Gastrocnemius medialis (tissue), 4 donors: ENCODE measurements at regions of chr12 and their contacts with region 1.

Region 1: GRCh38 chr12:120015313-120015712 is 26.3 kb downstream of the BICDL1 start:
- DNase-seq: no peak
- ATAC-seq: no peak
- H3K4me3 ChIP-seq: no peak overlapping the region
- H3K27ac ChIP-seq: no peak overlapping the region
- H3K4me1 ChIP-seq: no peaks in the 10 kb centered on the region
- H3K27me3 ChIP-seq: peaks cover 0 to 3% (median 3%) of the 10 kb centered on the region in 3 donors
- CTCF ChIP-seq: no peak
- POLR2A ChIP-seq: no peak

Region 2: GRCh38 chr12:119423285-119423684 is 592.0 kb before region 1 on chr12:
- in situ Hi-C with region 1: no loop called
- intact Hi-C with region 1: loop called (anchors 5 kb)
- DNase-seq: no peak
- ATAC-seq: no peak
- H3K4me3 ChIP-seq: no peak overlapping the region
- H3K27ac ChIP-seq: no peak overlapping the region
- H3K4me1 ChIP-seq: no peaks in the 10 kb centered on the region
- H3K27me3 ChIP-seq: no peaks in the 10 kb centered on the region
- CTCF ChIP-seq: no peak
- POLR2A ChIP-seq: no peak

Region 3: DNA sequence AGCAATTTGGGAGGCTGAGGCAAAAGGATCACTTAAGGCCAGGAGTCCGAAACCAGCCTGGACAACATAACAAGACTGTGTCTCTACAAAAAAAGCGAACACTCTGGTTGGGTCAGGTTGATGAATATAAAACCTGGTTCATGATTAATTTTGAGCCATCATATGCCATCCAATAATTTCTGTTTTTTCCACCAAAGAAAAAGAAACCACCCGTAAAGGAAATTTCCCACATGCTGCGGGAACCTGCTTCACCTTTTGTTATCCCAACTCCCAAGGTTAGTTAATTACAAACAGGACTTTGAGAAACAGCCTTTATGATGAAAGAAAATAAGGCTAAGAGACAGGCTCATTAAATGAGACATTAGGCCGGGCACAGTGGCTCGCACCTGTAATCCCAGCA is 50.4 kb before region 1 on chr12:
- in situ Hi-C with region 1: no loop called
- intact Hi-C with region 1: no loop called
- DNase-seq: no peak
- ATAC-seq: no peak
- H3K4me3 ChIP-seq: no peak overlapping the region
- H3K27ac ChIP-seq: no peak overlapping the region
- H3K4me1 ChIP-seq: no peaks in the 10 kb centered on the region
- H3K27me3 ChIP-seq: no peaks in the 10 kb centered on the region
- CTCF ChIP-seq: no peak
- POLR2A ChIP-seq: no peak

Region 4: DNA sequence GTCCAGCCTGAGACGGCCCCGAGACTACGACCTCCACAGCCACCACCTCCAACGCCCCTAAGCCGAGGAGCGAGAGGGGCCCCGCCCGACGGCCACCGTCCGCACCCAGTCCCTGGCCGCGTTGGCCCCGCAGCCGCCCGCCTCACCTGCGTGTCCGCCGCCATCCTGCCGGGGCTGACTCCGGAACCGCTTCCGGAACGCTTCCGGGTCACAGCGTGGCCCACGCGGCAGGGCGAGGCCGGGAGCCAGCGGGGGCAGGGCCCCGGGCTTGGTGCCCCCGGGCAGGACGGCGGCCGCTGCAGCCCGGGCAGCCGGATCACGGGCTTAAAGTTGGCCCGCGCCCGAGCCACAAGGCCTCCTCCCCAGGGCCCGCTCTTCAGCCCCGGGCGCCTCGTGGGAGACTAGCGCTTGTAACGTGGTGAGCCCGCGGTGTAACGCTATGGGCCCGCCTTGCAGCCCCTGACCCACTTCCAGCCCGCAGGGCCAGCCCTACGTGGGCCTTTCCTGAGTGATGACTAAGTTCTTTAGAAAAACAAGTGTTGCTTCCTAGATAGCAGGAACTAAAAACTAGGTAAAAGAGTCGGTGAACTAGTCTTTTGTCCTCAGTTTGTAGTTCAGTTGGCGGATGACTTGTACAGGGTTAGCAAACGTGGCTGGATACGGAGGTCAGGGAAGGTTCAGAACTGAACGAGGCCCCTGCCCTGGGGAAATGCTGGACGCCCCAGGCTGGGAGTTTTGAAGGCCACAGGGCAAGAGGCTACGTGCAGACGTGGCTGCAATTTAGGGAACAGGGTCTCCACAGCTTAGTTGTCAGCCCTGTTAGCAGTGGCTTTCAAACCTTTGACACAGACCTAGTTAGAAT is 179.5 kb after region 1 on chr12 and contains the start of gene GCN1:
- in situ Hi-C with region 1: no loop called
- intact Hi-C with region 1: no loop called
- DNase-seq: peak; percentile 66 to 84
- ATAC-seq: peak; percentile 84 to 89
- H3K4me3 ChIP-seq: peak within 1 kb of the TSS; percentile 81 to 94 (median 92)
- H3K27ac ChIP-seq: peak within 1 kb of the TSS; percentile 92 to 97 (median 96)
- H3K4me1 ChIP-seq: peaks cover 30 to 40% of the 10 kb centered on the region in 2 donors
- H3K27me3 ChIP-seq: no peaks in the 10 kb centered on the region
- CTCF ChIP-seq: no peak
- POLR2A ChIP-seq: peak; percentile 90 to 97
- total RNA-seq, gene GCN1: 58.2 to 99.7 (median 87.4) TPM